ENCODE measurements at regions of chr1 and their contacts with region 1.

Region 1: DNA sequence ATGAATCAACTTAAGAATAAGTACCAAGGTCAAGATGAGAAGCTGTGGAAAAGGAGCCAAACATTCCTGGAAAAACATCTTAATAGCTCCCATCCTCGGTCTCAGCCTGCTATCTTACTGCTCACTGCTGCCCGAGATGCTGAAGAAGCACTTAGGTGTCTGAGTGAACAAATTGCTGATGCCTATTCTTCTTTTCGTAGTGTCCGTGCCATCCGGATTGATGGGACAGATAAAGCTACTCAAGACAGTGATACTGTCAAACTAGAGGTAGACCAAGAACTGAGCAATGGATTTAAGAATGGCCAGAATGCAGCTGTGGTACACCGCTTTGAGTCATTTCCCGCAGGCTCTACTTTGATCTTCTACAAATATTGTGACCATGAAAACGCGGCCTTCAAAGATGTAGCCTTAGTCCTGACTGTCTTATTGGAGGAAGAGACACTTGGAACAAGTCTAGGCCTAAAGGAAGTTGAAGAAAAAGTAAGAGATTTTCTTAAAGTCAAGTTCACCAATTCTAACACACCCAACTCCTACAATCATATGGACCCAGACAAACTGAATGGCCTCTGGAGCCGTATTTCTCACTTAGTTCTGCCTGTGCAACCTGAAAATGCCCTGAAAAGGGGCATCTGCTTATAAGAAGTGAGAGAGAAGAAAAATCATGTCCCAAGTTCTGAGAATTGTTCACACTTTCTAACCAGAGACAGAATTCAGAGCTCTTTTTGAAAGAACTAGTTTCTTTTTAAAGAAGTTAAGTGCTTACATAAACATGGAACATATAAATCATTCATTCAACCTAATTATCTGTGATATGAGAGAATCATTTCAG is 35.7 kb downstream of the TOR1AIP1 start:
- DNase-seq: no peak
- ATAC-seq: no peak
- H3K4me3 ChIP-seq: no peak overlapping the region
- H3K4me3 Mint-ChIP-seq: no peak overlapping the region
- H3K27ac ChIP-seq: no peak overlapping the region
- H3K27ac Mint-ChIP-seq: no peak overlapping the region
- H3K4me1 ChIP-seq: no peaks in the 10 kb centered on the region
- H3K4me1 Mint-ChIP-seq: peaks cover 10% of the 10 kb centered on the region
- H3K27me3 ChIP-seq: no peaks in the 10 kb centered on the region
- H3K27me3 Mint-ChIP-seq: no peaks in the 10 kb centered on the region
- CTCF ChIP-seq: no peak

Region 2: DNA sequence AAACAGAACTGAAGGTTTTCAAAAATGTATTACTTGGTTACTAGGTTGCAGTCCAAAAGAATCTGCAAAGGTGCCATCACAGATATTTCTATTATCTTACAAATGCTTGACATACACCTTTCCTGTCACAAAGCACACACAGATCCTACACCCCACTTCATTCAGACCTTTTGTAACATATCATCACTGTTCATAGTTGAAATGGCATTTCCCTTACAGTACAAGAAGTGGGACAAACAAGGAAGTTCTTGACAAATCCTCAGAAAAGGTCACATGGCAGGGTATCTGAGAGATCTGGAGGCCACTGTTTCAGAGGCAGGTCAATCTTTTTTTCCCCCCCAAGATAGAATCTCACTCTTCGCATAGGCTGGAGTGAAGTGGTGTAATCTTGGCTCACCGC is 61.5 kb before region 1 on chr1:
- CTCF ChIA-PET with region 1: no interaction called
- POLR2A ChIA-PET with region 1: no interaction called
- intact Hi-C with region 1: no loop called
- DNase-seq: no peak
- ATAC-seq: no peak
- H3K4me3 ChIP-seq: no peak overlapping the region
- H3K4me3 Mint-ChIP-seq: no peak overlapping the region
- H3K27ac ChIP-seq: no peak overlapping the region
- H3K27ac Mint-ChIP-seq: no peak overlapping the region
- H3K4me1 ChIP-seq: no peaks in the 10 kb centered on the region
- H3K4me1 Mint-ChIP-seq: peaks cover 3% of the 10 kb centered on the region
- H3K27me3 ChIP-seq: no peaks in the 10 kb centered on the region
- H3K27me3 Mint-ChIP-seq: no peaks in the 10 kb centered on the region
- CTCF ChIP-seq: no peak

Region 3: DNA sequence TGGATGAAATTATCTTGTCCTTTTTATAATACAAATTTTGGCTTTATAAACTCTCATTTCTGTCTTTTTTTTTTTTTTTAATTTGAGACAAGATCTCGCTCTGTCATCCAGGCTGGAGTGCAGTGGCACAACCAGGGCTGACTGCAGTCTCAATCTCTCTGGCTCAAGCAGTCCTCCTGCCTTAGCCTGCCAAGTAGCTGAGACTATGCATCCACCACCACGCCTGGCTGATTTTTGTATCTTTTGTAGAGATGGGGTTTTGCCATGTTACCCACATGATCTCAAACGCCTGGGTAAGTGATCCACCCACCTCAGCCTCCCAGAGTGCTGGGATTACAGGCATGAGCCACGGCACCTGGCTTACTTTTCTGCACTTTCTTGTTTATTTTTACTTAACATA is 28.2 kb before region 1 on chr1:
- CTCF ChIA-PET with region 1: no interaction called
- POLR2A ChIA-PET with region 1: no interaction called
- intact Hi-C with region 1: no loop called
- DNase-seq: no peak
- ATAC-seq: no peak
- H3K4me3 ChIP-seq: no peak overlapping the region
- H3K4me3 Mint-ChIP-seq: no peak overlapping the region
- H3K27ac ChIP-seq: no peak overlapping the region
- H3K27ac Mint-ChIP-seq: no peak overlapping the region
- H3K4me1 ChIP-seq: peaks cover 35% of the 10 kb centered on the region
- H3K4me1 Mint-ChIP-seq: peaks cover 46% of the 10 kb centered on the region
- H3K27me3 ChIP-seq: no peaks in the 10 kb centered on the region
- H3K27me3 Mint-ChIP-seq: no peaks in the 10 kb centered on the region
- CTCF ChIP-seq: no peak

Region 4: DNA sequence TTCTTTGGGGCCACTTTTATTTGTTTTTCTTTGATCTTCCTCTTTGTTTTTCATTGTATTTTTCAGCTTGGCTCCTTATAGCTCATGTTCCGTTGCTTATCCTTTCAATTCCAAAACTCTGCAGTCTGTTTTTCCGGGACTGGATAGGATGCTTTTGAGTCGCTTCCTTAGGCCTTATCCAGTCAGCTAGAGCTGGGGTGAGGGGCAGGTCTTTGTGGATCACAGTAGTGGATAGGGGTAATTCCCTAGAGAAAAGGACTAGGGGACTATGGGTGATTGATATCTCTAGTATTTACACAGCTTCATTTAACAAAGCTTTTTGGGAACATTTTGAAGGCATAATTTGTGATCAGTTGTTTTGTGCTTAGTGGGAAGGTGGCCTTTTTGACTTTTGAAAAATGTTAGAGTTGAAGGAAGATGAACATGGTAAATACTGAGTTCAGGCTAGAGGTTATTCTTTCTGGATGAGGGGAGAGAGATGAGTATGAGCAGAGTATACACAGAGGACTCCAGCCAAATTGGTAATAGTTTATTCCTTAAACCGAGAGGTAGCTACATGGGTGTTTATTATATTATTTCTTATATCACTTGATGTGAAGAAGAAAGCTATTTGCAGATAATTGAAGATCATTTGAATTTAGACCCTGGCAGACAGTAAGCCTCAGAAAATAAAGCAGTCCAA is 59.3 kb after region 1 on chr1:
- CTCF ChIA-PET with region 1: no interaction called
- POLR2A ChIA-PET with region 1: no interaction called
- intact Hi-C with region 1: loop called in 1 of 2 experiments (anchors 5 kb)
- DNase-seq: no peak
- ATAC-seq: no peak
- H3K4me3 ChIP-seq: no peak overlapping the region
- H3K4me3 Mint-ChIP-seq: no peak overlapping the region
- H3K27ac ChIP-seq: no peak overlapping the region
- H3K27ac Mint-ChIP-seq: peak overlapping the region; percentile 7
- H3K4me1 ChIP-seq: peaks cover 10% of the 10 kb centered on the region
- H3K4me1 Mint-ChIP-seq: peaks cover 71% of the 10 kb centered on the region
- H3K27me3 ChIP-seq: no peaks in the 10 kb centered on the region
- H3K27me3 Mint-ChIP-seq: no peaks in the 10 kb centered on the region
- CTCF ChIP-seq: no peak